AG04449 (cell line): ENCODE measurements at regions of chr22 and their contacts with region 1.

Region 1: GRCh38 chr22:45994491-45995404 is 17.8 kb upstream of the WNT7B start:
- DNase-seq: no peak
- H3K4me3 ChIP-seq: no peak overlapping the region
- CTCF ChIP-seq: peak; percentile 97

Region 2: DNA sequence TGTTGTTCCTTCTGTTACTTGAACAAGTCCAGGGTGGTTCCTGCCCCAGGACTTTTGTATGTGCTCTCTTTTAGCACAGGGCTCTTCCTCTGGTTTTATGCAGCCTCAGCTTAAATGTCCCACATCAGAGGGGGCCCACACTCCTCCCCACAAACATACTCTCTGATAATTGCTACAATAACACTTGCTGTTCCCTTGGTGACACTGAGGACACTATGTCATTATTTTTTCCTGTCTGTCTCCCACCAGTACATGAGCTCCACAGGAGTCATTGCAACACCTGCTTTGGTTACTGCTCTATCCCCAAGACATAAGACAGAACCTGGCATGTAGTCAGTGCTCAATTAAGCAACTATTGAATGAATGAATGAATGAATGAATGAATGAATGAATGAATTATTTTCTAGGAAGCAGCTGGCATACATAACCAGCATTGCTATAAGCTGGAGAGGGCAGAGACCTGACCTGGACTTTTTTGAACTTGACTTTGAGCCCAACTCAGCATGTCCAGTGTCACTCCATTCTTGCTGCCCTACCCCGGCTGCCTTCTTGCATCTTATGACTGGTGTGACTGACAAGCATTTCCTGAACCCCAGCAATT is 10.3 kb before region 1 on chr22:
- CTCF ChIA-PET with region 1: interaction called, 18 read pairs
- POLR2A ChIA-PET with region 1: interaction called, 3 read pairs
- DNase-seq: no peak
- H3K4me3 ChIP-seq: no peak overlapping the region
- CTCF ChIP-seq: no peak

Region 3: DNA sequence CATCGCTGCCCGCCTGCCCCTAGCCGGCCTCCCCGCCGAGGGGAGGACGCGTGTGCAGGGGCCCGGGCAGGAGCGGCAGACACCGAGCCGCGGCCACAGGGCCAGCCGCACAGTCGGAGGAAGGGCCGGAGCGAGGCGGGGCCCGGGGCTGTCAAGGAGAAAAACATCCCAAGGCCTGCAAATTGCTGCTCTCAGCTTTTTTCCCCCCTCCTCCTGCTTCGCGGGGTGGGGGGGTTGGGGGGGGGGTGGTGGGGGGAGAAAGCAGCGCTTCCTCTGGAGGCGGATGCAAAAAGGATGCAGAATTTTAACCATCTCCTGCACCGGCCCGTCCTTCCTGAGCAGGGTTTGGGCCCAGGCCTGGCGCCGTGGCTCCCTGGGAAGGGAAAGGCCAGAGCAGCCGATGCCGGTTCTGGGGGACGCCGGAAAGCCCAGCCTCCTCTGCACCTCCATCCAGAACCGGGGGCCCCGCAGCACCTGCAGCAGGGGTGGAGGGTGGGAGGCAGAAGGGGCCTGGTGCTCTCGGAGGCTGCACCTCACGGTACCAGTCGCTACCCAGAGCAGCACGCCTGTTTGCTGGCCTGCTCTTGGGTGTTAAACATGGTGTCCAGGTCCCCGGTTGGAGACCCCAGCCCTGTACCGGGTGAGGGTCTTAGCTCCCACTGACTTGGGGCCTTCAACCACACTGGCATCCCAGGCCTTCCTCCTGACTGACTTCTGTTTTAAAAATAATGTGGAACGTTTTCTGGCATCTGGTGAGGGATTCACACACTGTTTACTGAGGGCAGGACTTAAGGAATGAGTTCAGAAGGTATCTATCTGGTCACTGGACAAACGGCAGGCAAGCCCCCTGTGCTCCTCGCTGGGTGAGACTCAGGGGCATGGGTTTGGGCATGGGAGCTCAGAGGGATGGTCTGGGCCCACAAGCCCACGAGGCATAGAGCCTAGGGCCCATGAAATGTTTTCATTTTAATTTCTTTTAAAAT is 59.6 kb after region 1 on chr22:
- CTCF ChIA-PET with region 1: interaction called, 10 read pairs
- POLR2A ChIA-PET with region 1: no interaction called
- DNase-seq: no peak
- H3K4me3 ChIP-seq: peak overlapping the region; percentile 66
- CTCF ChIP-seq: no peak

Region 4: DNA sequence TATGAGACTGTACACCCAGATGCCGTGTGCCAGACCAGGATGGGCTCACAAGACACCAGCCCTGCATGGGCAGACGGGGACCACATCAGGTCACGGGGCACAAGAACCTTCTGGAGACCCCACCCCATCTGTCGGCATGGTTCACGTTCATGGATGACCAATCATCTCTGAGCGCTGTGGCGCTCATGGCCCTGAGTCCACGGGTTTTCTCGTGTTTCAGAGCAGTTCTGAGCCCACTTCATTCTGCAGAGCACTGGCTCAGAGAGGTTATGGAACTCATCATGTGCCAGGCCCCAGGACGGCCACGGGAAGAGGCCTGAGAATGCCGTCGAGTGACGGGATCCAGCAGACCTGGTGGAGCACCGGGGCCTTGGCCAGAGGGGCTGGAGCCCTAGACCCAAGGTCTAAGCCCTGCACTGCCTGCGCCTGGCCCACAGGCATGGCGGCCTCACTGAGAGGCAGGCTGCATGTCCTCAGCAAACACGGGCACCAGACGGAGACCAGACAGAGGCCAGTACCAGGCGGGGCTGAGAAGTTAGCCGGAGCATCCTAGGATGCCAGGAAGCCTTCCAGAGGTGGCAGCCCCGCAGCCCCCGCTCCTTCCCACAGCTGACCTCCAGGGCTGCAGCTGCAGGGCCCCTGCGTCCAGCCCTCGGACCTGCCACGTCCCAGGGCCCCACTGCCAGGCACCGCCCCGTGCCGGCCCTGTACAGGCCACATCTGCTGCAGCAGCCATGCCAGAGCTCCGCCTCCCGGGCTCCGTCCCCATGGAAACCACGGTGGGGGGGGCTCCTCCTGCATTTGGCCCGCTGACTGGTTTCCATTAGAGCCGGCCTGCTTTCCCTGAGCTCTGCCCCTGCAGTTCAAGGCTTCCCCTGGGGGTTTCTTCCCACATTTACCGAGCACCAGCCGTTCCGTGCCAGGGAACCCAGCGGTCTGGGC is 92.9 kb after region 1 on chr22:
- CTCF ChIA-PET with region 1: interaction called, 11 read pairs
- POLR2A ChIA-PET with region 1: interaction called, 3 read pairs
- DNase-seq: no peak
- H3K4me3 ChIP-seq: peak overlapping the region; percentile 30
- CTCF ChIP-seq: no peak

Region 5: DNA sequence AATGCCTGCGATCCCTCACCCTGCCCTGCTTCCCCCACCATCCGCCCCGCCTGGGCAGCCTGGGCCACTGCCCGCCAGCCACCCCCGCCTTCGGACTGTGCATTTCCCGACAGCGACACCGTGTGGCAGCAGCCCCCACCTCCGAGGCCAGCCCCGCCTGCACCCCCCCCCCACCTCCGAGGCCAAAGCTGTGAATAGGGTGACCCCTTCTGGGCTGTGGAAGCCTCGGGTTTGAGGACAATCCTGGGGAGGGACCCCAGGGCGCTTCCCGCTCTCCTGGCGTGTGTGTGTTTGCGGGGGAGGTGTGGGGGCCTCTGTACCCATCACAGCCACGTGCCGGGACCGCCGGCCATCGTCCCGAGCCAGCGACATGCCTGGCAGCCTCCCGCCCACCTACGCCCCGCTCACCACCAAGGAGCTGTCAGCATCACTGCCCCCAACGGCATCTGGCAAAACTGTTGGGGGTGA is 121.8 kb after region 1 on chr22:
- CTCF ChIA-PET with region 1: interaction called, 147 read pairs
- POLR2A ChIA-PET with region 1: interaction called, 21 read pairs
- DNase-seq: no peak
- H3K4me3 ChIP-seq: no peak overlapping the region
- CTCF ChIP-seq: peak; percentile 76

Region 6: GRCh38 chr22:46309526-46310085 is 314.9 kb after region 1 on chr22:
- CTCF ChIA-PET with region 1: interaction called, 129 read pairs
- POLR2A ChIA-PET with region 1: no interaction called
- DNase-seq: no peak
- H3K4me3 ChIP-seq: no peak overlapping the region
- CTCF ChIP-seq: no peak